ENCODE measurements at regions of chr15 and their contacts with region 1.

Region 1: DNA sequence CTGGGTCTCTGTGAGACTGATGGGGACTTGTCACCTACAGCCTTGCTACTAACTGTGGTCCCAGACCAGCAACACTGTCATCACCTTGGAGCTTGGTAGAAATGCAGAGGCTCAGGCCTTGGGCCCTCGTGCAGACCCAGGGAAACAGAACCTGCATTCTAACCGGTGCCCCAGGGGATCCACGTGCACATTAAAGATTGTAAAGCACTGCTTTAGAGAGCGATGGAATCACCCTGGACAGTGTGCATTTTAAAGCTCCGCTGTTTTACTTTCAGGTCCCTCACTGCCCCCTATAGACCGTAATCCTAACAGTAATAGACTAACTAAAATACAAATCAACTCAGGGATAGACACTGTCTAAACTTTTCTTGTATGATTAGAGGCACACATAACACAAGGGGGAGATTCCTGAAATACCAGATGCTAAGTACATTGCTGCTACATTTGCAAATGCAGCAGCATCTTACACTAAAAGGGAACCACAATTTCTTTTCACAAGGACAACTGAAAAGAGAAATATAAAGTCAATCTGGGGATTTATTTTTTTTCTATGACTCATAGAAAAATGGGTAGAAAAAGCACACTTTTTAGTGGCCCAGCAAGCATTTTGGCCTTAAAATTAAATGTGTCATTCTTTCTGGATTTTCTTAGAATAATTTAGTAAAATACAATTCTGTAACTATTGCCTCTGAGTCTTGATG is 10.5 kb upstream of the SH3GL3 start:
- DNase-seq: no peak
- ATAC-seq: no peak
- H3K4me3 Mint-ChIP-seq: no peak overlapping the region
- H3K27ac Mint-ChIP-seq: no peak overlapping the region
- H3K4me1 Mint-ChIP-seq: no peaks in the 10 kb centered on the region
- H3K27me3 Mint-ChIP-seq: peaks cover 15% of the 10 kb centered on the region

Region 2: GRCh38 chr15:83559310-83559966 is 122.8 kb after region 1 on chr15:
- CTCF ChIA-PET with region 1: interaction called, 16 read pairs
- POLR2A ChIA-PET with region 1: no interaction called
- intact Hi-C with region 1: loop called (anchors 1 kb)
- DNase-seq: peak; percentile 65
- ATAC-seq: peak; percentile 60
- H3K4me3 Mint-ChIP-seq: no peak overlapping the region
- H3K27ac Mint-ChIP-seq: no peak overlapping the region
- H3K4me1 Mint-ChIP-seq: no peaks in the 10 kb centered on the region
- H3K27me3 Mint-ChIP-seq: peaks cover 12% of the 10 kb centered on the region

Region 3: GRCh38 chr15:84035399-84035766 is 598.8 kb after region 1 on chr15:
- CTCF ChIA-PET with region 1: interaction called, 3 read pairs
- POLR2A ChIA-PET with region 1: no interaction called
- intact Hi-C with region 1: loop called in 1 of 2 experiments (anchors 10 kb)
- DNase-seq: no peak
- ATAC-seq: no peak
- H3K4me3 Mint-ChIP-seq: no peak overlapping the region
- H3K27ac Mint-ChIP-seq: no peak overlapping the region
- H3K4me1 Mint-ChIP-seq: no peaks in the 10 kb centered on the region
- H3K27me3 Mint-ChIP-seq: peaks cover 14% of the 10 kb centered on the region